ENCODE measurements at regions of chr2 and their contacts with region 1.

Region 1: DNA sequence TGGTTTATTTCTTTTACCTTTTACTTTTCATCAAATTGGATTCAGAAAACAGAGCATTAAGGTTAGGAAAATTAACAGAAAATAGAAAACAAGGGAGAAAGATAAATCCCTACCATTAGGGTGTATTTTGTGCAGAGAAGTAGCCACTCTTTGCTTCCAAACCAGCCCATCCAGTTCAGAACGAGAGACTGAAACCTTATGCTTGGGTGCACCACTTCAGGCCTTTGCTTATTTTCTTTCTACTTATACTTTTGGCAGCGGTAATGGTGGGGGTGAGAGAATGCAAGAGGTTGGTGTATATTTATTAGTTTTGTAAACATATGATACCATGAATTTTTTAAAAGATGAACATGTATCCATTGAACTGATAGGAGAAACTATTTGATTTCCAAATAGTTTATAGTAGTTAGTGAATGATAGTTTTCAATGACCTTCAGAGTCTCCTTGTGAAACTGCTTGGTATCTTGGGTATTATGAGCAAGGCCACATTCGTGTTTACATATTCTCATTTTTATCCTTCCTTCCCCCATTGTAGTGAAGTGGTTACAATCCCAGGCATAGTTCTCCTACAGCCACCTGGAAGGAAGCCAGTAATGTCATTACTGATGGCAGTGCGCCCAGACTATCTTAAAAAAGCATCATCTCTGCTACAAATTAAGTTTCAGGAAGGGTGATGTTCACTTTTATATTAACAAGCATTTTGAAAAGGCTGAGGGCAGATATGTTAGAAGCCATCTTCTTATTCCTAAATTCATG is 60.8 kb downstream of the MFSD6 start:
- DNase-seq: peak; percentile 65 to 87 (median 71)
- ATAC-seq: peak; percentile 87 to 90
- H3K4me3 ChIP-seq: no peak overlapping the region
- H3K27ac ChIP-seq: peak overlapping the region; percentile 83
- H3K4me1 ChIP-seq: peaks cover 15% of the 10 kb centered on the region
- H3K27me3 ChIP-seq: no peaks in the 10 kb centered on the region

Region 2: GRCh38 chr2:190415794-190416775 is 52.9 kb before region 1 on chr2:
- intact Hi-C with region 1: loop called in 1 of 4 experiments (anchors 10 kb)
- DNase-seq: no peak
- ATAC-seq: peak in 1 of 2 donors; percentile 47
- H3K4me3 ChIP-seq: peak overlapping the region; percentile 20
- H3K27ac ChIP-seq: no peak overlapping the region
- H3K4me1 ChIP-seq: peaks cover 4% of the 10 kb centered on the region
- H3K27me3 ChIP-seq: no peaks in the 10 kb centered on the region

Measured in right cardiac atrium (tissue), 5 donors.